Endothelial cell of umbilical vein (primary cell): ENCODE measurements at regions of chr19 and their contacts with region 1.

Region 1: DNA sequence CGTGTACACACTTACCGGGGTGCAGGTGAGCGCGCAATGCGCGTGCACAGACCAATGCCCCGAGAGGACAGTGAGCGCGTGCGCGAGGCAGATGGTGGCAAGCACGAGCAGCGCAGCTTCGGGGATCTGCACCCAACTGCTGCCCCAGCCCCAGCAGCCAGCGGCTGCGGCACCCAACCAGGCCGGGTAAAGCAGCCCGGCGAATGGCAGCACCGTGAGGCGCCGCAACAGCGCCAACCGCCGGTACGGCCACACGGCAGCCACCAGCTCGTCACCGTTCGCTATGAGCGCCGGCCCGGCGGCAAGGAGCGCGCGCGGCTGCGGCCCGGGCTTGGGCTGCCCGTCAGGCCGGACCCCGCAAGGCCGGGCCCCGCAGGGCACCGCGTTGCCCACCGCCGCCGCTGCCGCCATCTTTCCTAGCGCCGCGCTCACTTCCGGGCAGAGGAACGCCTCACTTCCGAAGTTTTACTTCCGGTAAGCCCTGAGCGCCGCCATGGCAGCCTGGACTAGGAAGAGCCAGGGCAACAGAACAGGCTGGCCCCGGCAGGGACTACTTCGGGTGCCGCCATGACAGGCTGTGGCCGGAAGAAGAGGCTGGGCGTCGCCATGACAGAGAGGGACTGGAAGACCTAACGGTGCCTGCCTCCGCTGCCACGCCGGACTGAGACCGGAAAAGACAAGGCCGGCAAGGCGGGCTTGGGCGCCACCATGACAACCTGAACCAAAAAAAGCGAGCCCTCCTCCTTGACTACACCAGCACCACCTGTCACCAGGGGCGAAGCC is at the start of gene ATP13A1:
- DNase-seq: peak; percentile 96
- H3K4me3 ChIP-seq: peak within 1 kb of the TSS; percentile 3 to 57 (median 56)
- H3K27ac ChIP-seq: peak within 1 kb of the TSS; percentile 77
- H3K4me1 ChIP-seq: peaks cover 9% of the 10 kb centered on the region
- H3K27me3 ChIP-seq: no peaks in the 10 kb centered on the region
- CTCF ChIP-seq: peak in 1 of 2 donors; percentile 34
- POLR2A ChIP-seq: peak; percentile 75
- total RNA-seq, gene ATP13A1: 48.7 and 56.8 TPM in 2 replicates

Region 2: GRCh38 chr19:19606021-19606420 is 57.4 kb before region 1 on chr19:
- CTCF ChIA-PET with region 1: no interaction called
- POLR2A ChIA-PET with region 1: no interaction called
- dilution Hi-C with region 1: no loop called
- intact Hi-C with region 1: no loop called
- DNase-seq: no peak
- H3K4me3 ChIP-seq: no peak overlapping the region
- H3K27ac ChIP-seq: no peak overlapping the region
- H3K4me1 ChIP-seq: no peaks in the 10 kb centered on the region
- H3K27me3 ChIP-seq: no peaks in the 10 kb centered on the region
- CTCF ChIP-seq: no peak
- POLR2A ChIP-seq: no peak

Region 3: GRCh38 chr19:19732579-19733501 is 69.4 kb after region 1 on chr19 and contains the start of gene ZNF14:
- CTCF ChIA-PET with region 1: no interaction called
- POLR2A ChIA-PET with region 1: no interaction called
- dilution Hi-C with region 1: no loop called
- intact Hi-C with region 1: loop called (anchors 5 kb)
- DNase-seq: peak; percentile 95
- H3K4me3 ChIP-seq: peak within 1 kb of the TSS; percentile 37 to 79 (median 78)
- H3K27ac ChIP-seq: peak within 1 kb of the TSS; percentile 1
- H3K4me1 ChIP-seq: peaks cover 5% of the 10 kb centered on the region
- H3K27me3 ChIP-seq: no peaks in the 10 kb centered on the region
- CTCF ChIP-seq: peak in 1 of 2 donors; percentile 27
- POLR2A ChIP-seq: peak; percentile 89
- total RNA-seq, gene ZNF14: 2.1 and 2.6 TPM in 2 replicates

Region 4: DNA sequence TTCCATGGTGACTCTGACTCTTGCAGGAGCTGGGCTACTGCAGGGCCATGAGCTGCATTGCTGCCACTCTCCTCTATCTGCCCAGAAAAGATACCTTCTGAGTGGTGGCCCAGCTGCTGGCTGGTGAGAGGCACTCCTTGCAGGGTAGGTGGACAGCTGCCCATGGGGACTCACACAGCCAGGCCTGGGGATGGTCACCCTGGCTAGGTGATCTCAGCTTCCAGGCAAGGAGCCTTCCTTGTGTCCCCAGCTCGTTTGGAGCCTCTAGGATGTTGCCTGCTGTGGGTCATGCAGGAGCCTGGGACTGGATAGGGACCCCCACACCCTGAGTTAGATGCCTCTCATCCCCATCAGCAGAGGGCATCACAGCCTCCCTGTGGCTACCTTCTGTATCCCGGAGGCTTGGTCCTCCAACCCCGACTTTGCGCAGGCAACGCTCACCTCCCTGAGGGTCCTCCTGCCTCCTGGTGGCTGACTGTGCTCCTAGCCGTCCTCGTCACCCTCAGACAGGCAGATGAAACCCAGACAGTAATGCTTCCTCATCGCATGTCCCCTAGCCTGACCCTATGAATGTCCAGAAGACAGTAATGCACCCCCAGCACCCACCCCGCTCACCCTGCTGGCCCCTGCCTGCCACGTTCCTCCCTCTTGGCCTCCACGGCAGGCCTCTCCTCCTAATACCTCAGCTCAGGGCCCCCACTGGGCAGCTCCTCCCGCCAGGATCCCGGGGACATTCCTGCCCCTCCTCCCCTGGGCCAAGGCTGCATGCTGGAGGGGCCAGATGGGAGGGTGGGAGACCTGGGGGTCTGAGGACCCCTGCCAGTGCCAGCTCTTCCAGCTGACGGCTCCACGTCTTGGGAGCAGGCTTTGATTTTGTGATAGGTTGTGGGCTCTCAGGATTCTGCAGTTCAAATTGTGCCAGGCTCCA is 83.1 kb after region 1 on chr19:
- CTCF ChIA-PET with region 1: no interaction called
- POLR2A ChIA-PET with region 1: no interaction called
- dilution Hi-C with region 1: no loop called
- intact Hi-C with region 1: no loop called
- DNase-seq: no peak
- H3K4me3 ChIP-seq: no peak overlapping the region
- H3K27ac ChIP-seq: no peak overlapping the region
- H3K4me1 ChIP-seq: no peaks in the 10 kb centered on the region
- H3K27me3 ChIP-seq: no peaks in the 10 kb centered on the region
- CTCF ChIP-seq: no peak
- POLR2A ChIP-seq: no peak

Region 5: GRCh38 chr19:19900729-19901444 is 237.4 kb after region 1 on chr19 and contains the start of gene ZNF93:
- CTCF ChIA-PET with region 1: no interaction called
- POLR2A ChIA-PET with region 1: no interaction called
- dilution Hi-C with region 1: no loop called
- intact Hi-C with region 1: loop called (anchors 10 kb)
- DNase-seq: peak; percentile 92
- H3K4me3 ChIP-seq: peak within 1 kb of the TSS; percentile 53 to 77 (median 72)
- H3K27ac ChIP-seq: peak within 1 kb of the TSS; percentile 79
- H3K4me1 ChIP-seq: no peaks in the 10 kb centered on the region
- H3K27me3 ChIP-seq: no peaks in the 10 kb centered on the region
- CTCF ChIP-seq: no peak
- POLR2A ChIP-seq: no peak
- total RNA-seq, gene ZNF93: 5.6 and 9.9 TPM in 2 replicates